BJ (cell line): ENCODE measurements at regions of chr17 and their contacts with region 1.

Region 1: GRCh38 chr17:43338886-43339516 is 59.8 kb upstream of the ARL4D start:
- DNase-seq: no peak
- H3K4me3 ChIP-seq: no peak overlapping the region
- H3K27me3 ChIP-seq: no peaks in the 10 kb centered on the region
- CTCF ChIP-seq: peak; percentile 84

Region 2: GRCh38 chr17:43024407-43025289 is 314.4 kb before region 1 on chr17 and contains the start of gene RND2:
- CTCF ChIA-PET with region 1: interaction called, 12 read pairs
- POLR2A ChIA-PET with region 1: no interaction called
- DNase-seq: peak; percentile 72
- H3K4me3 ChIP-seq: peak within 1 kb of the TSS; percentile 50
- H3K27me3 ChIP-seq: peaks cover 2% of the 10 kb centered on the region; the same call in 1 of the 2 replicates
- CTCF ChIP-seq: peak; percentile 90
- polyA plus RNA-seq, gene RND2: 0.89 and 1.3 TPM in 2 replicates

Region 3: GRCh38 chr17:43324205-43324893 is 14.7 kb before region 1 on chr17:
- CTCF ChIA-PET with region 1: interaction called, 13 read pairs
- POLR2A ChIA-PET with region 1: no interaction called
- DNase-seq: no peak
- H3K4me3 ChIP-seq: no peak overlapping the region
- H3K27me3 ChIP-seq: no peaks in the 10 kb centered on the region
- CTCF ChIP-seq: peak; percentile 28; the same call in 1 of the 2 replicates

Region 4: GRCh38 chr17:43384476-43384862 is 45.5 kb after region 1 on chr17:
- CTCF ChIA-PET with region 1: no interaction called
- POLR2A ChIA-PET with region 1: no interaction called
- DNase-seq: no peak
- H3K4me3 ChIP-seq: no peak overlapping the region
- H3K27me3 ChIP-seq: no peaks in the 10 kb centered on the region
- CTCF ChIP-seq: no peak